Heart right ventricle (tissue), 16 donors: ENCODE measurements at regions of chr10 and their contacts with region 1.

Region 1: DNA sequence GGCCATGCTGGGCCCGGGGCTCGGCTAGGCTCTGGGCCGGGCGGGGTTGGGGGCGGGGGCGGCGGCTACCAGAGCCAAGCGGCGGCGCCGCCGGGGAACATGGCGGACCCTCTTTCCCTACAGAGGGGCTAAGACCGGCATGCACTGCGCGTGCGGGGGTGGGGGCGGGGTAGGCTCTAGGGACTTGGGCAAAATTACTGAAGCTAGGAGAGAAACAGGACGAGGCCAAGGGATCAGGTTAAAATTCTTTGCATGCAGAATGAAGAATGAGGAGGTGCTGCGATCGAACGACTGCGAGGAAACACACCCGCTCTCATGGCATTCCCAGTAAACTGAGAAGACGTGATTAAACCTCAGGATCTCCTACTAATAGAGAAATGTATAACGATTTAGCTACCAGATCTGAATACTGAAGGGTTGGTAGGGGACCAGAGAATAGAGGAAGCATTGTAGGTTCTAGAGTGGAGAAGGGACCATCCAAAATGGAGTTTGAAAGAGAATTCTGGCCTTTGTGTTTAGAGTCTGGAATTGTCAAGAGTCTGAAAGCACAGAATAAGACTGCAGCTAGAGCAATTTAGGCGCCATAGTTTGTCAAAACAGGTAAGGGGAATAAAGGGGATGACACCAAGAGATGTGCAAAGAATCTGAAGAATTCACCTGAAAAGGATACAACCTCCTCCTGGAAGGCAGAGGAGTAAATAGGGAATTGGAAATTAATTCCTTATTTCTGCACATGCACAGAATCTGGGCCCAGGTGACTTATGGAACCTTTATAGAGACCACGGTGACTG is at the start of gene PPP3CB:
- DNase-seq: peak; percentile 91 to 95
- ATAC-seq: peak; percentile 88 to 96 (median 92)
- H3K4me3 ChIP-seq: peak within 1 kb of the TSS; percentile 66 to 98 (median 83)
- H3K27ac ChIP-seq: peak within 1 kb of the TSS; percentile 90 to 99 (median 98)
- H3K4me1 ChIP-seq: peaks cover 7 to 48% (median 41%) of the 10 kb centered on the region in 9 donors
- H3K27me3 ChIP-seq: no peaks in the 10 kb centered on the region
- CTCF ChIP-seq: no peak
- total RNA-seq, gene PPP3CB: 52.5 to 78.6 (median 64.5) TPM

Region 2: DNA sequence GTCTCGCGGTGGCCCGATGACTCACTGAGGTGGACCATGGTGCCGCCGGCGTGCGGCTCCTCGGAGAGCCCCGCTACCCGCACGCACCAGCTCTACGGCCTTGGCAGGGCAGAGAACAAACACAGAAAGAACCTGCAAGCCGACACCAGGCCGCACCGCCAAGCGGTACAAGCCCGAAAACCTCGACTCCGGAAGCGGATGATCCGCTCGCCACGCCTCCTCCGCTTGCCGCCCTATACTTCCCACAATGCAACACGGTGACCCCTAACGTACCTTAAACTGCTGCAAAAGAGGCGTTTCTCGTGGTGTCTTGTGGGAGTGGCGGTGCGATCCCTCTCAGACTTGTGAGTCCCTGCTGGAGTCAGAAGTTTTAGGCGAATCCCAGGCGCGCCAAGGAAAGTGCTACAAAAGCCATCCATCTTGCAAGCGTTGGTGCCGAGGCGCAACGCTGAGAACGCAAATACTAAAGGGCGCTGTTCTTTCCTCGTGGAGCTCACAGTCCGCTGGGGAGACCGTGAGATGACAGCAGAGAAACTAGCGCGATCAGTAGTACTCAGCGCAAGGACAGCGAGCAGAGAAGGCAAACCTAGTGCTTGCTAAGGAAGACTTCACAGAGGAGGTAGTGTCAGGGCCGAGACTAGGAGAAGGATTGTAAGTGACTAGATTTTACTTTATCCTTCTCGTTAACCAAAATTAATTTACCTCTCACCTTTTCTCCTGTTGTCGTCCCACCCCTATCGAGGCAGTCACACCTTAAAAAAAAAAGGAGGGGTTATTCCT is 243.4 kb before region 1 on chr10 and contains the start of gene MRPS16:
- intact Hi-C with region 1: loop called in 2 of 10 experiments (anchors 5 to 10 kb)
- DNase-seq: peak; percentile 87 to 97
- ATAC-seq: peak; percentile 95 to 99 (median 98)
- H3K4me3 ChIP-seq: peak within 1 kb of the TSS; percentile 69 to 96 (median 84)
- H3K27ac ChIP-seq: peak within 1 kb of the TSS; percentile 49 to 96 (median 90)
- H3K4me1 ChIP-seq: peaks cover 7 to 36% (median 30%) of the 10 kb centered on the region in 9 donors
- H3K27me3 ChIP-seq: no peaks in the 10 kb centered on the region
- CTCF ChIP-seq: no peak
- total RNA-seq, gene MRPS16: 95.5 to 115 (median 106) TPM

Region 3: GRCh38 chr10:73413528-73414229 is 82.4 kb before region 1 on chr10 and contains the start of gene ANXA7:
- intact Hi-C with region 1: loop called in 1 of 10 experiments (anchors 1 kb)
- DNase-seq: peak; percentile 94 to 95
- ATAC-seq: peak; percentile 98 to 99 (median 98)
- H3K4me3 ChIP-seq: peak within 1 kb of the TSS; percentile 81 to 99 (median 88)
- H3K27ac ChIP-seq: peak within 1 kb of the TSS; percentile 87 to 99 (median 96)
- H3K4me1 ChIP-seq: peaks cover 0 to 41% (median 28%) of the 10 kb centered on the region in 9 donors
- H3K27me3 ChIP-seq: no peaks in the 10 kb centered on the region
- CTCF ChIP-seq: peak in 6 of 9 donors; percentile 38 to 67 (median 47)
- total RNA-seq, gene ANXA7: 104 to 163 (median 149) TPM